ENCODE measurements at regions of chr2 and their contacts with region 1.

Region 1: DNA sequence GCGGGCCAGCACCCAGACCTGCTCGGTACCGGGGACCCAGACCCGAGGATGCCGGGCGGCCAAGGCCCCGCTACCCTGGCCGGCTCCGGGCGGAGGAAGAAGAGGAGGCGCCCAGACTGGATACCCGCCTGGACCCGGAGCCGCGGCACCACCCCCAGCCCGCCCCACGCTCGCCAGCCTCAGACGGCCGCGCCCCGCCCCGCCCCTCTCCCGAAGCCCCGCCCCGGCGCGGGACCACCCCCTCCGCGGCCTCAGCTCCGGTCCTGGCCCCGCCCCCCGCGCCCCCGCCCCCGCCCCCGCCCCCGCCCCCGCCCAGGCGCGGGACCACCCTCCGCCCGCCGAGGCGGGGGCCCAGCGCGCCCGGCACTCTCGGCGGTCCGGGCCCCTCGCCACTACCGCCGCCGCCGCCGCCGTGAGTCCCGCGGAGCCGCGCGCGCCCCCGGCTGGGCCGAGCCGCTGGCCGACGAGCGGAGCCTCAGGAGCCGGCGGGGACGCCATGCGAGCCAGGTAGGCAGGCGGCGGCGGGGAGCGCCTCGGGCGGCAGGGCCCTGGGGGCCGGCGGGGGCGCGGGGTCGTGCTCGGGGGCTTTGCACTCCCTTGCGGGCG is at the start of gene SH3BP4:
- DNase-seq: peak; percentile 72
- ATAC-seq: peak; percentile 75
- H3K4me3 ChIP-seq: peak within 1 kb of the TSS; percentile 65
- H3K27ac ChIP-seq: peak within 1 kb of the TSS; percentile 99
- H3K4me1 ChIP-seq: peaks cover 33% of the 10 kb centered on the region
- H3K27me3 ChIP-seq: no peaks in the 10 kb centered on the region
- CTCF ChIP-seq: no peak
- POLR2A ChIP-seq: peak; percentile 91
- RAD21 ChIP-seq: peak; percentile 25; the same call in 1 of the 2 replicates
- total RNA-seq, gene SH3BP4: 112 and 122 TPM in 2 replicates

Region 2: GRCh38 chr2:234564699-234565098 is 387.1 kb before region 1 on chr2:
- CTCF ChIA-PET with region 1: interaction called, 4 read pairs
- POLR2A ChIA-PET with region 1: interaction called, 4 read pairs
- dilution Hi-C with region 1: no loop called
- in situ Hi-C with region 1: no loop called
- intact Hi-C with region 1: loop called (anchors 1 kb)
- DNase-seq: peak; percentile 80
- ATAC-seq: peak; percentile 87
- H3K4me3 ChIP-seq: no peak overlapping the region
- H3K27ac ChIP-seq: no peak overlapping the region; the same call in 1 of the 2 replicates
- H3K4me1 ChIP-seq: peaks cover 8% of the 10 kb centered on the region
- H3K27me3 ChIP-seq: no peaks in the 10 kb centered on the region; the same call in 1 of the 2 replicates
- CTCF ChIP-seq: peak; percentile 56
- POLR2A ChIP-seq: no peak
- RAD21 ChIP-seq: peak; percentile 71

Region 3: GRCh38 chr2:234674781-234675201 is 277.0 kb before region 1 on chr2:
- CTCF ChIA-PET with region 1: interaction called, 5 read pairs
- POLR2A ChIA-PET with region 1: interaction called, 8 read pairs
- dilution Hi-C with region 1: no loop called
- in situ Hi-C with region 1: no loop called
- intact Hi-C with region 1: loop called (anchors 2 kb)
- DNase-seq: peak; percentile 81
- ATAC-seq: peak; percentile 56
- H3K4me3 ChIP-seq: no peak overlapping the region
- H3K27ac ChIP-seq: peak overlapping the region; percentile 100
- H3K4me1 ChIP-seq: peaks cover 58% of the 10 kb centered on the region
- H3K27me3 ChIP-seq: no peaks in the 10 kb centered on the region
- CTCF ChIP-seq: no peak
- POLR2A ChIP-seq: peak; percentile 38; the same call in 1 of the 2 replicates
- RAD21 ChIP-seq: no peak

Region 4: DNA sequence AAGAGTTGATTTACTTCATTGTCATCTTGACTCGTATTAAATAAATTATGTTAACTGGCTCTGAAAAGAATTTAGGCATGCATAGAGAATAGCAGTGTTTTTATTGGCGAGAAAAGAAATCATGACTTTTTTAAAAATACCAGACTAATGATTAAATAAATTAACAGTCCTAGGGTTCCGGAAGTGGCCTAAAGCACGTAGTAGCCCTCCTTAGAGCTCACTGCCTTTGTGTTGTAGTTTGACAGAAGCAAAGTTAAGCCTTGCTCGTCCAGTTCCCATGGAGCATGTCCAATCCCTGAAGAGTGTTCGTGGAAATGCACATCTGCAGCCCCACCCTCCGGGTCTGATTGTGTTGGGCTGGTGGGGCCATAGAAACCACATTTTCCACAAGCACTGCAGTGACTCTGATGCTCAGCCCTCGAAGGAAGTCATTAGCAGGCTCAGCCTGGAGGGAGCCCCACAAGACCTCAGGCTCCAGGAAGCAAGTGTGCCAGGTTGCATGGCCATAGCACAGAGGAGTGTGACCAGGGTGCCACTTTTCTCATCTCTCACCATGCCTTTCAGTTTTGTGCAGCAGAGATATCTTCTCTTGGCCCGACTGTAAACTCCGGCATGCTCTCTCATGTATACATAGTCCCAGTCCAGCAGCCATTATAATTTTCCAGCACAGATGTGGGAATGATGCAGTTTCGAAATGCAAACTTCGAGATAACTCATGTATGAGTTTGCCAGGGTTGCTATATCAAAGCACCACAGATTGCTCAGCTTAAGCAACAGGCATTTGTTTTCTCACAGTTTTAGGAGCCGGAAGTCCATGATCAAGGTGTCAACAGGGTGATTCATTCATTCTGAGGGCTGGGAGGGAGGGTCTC is 188.5 kb before region 1 on chr2:
- CTCF ChIA-PET with region 1: no interaction called
- POLR2A ChIA-PET with region 1: no interaction called
- dilution Hi-C with region 1: no loop called
- in situ Hi-C with region 1: no loop called
- intact Hi-C with region 1: loop called (anchors 2 kb)
- DNase-seq: peak; percentile 87
- ATAC-seq: peak; percentile 87
- H3K4me3 ChIP-seq: no peak overlapping the region
- H3K27ac ChIP-seq: peak overlapping the region; percentile 85
- H3K4me1 ChIP-seq: peaks cover 12% of the 10 kb centered on the region
- H3K27me3 ChIP-seq: no peaks in the 10 kb centered on the region
- CTCF ChIP-seq: no peak
- POLR2A ChIP-seq: no peak
- RAD21 ChIP-seq: 0 out of 2 replicates have a peak, but pooled peaks have one; percentile 10

Region 5: GRCh38 chr2:234881413-234882241 is 70.1 kb before region 1 on chr2:
- CTCF ChIA-PET with region 1: interaction called, 3 read pairs
- POLR2A ChIA-PET with region 1: interaction called, 3 read pairs
- dilution Hi-C with region 1: no loop called
- in situ Hi-C with region 1: no loop called
- intact Hi-C with region 1: loop called (anchors 1 kb)
- DNase-seq: peak; percentile 97
- ATAC-seq: peak; percentile 88
- H3K4me3 ChIP-seq: peak overlapping the region; percentile 12; the same call in 1 of the 2 replicates
- H3K27ac ChIP-seq: peak overlapping the region; percentile 96
- H3K4me1 ChIP-seq: peaks cover 13% of the 10 kb centered on the region
- H3K27me3 ChIP-seq: no peaks in the 10 kb centered on the region
- CTCF ChIP-seq: peak; percentile 91
- POLR2A ChIP-seq: no peak
- RAD21 ChIP-seq: peak; percentile 64

Region 6: GRCh38 chr2:234996069-234996940 is 44.5 kb after region 1 on chr2:
- CTCF ChIA-PET with region 1: interaction called, 4 read pairs
- POLR2A ChIA-PET with region 1: interaction called, 4 read pairs
- dilution Hi-C with region 1: no loop called
- in situ Hi-C with region 1: no loop called
- intact Hi-C with region 1: loop called (anchors 1 kb)
- DNase-seq: peak; percentile 79
- ATAC-seq: peak; percentile 78
- H3K4me3 ChIP-seq: no peak overlapping the region
- H3K27ac ChIP-seq: peak overlapping the region; percentile 84
- H3K4me1 ChIP-seq: peaks cover 78% of the 10 kb centered on the region
- H3K27me3 ChIP-seq: no peaks in the 10 kb centered on the region
- CTCF ChIP-seq: peak; percentile 35
- POLR2A ChIP-seq: no peak
- RAD21 ChIP-seq: peak; percentile 43

Region 7: GRCh38 chr2:235106874-235107639 is 155.3 kb after region 1 on chr2:
- CTCF ChIA-PET with region 1: no interaction called
- POLR2A ChIA-PET with region 1: no interaction called
- dilution Hi-C with region 1: no loop called
- in situ Hi-C with region 1: loop called (anchors 10 kb)
- intact Hi-C with region 1: loop called (anchors 2 kb)
- DNase-seq: peak; percentile 76
- ATAC-seq: peak; percentile 97
- H3K4me3 ChIP-seq: no peak overlapping the region
- H3K27ac ChIP-seq: no peak overlapping the region
- H3K4me1 ChIP-seq: peaks cover 4% of the 10 kb centered on the region; the same call in 1 of the 2 replicates
- H3K27me3 ChIP-seq: peaks cover 3% of the 10 kb centered on the region
- CTCF ChIP-seq: peak; percentile 80
- POLR2A ChIP-seq: no peak
- RAD21 ChIP-seq: peak; percentile 89

Measured in IMR-90 (cell line).